ENCODE measurements at regions of chr17 and their contacts with region 1.

Region 1: DNA sequence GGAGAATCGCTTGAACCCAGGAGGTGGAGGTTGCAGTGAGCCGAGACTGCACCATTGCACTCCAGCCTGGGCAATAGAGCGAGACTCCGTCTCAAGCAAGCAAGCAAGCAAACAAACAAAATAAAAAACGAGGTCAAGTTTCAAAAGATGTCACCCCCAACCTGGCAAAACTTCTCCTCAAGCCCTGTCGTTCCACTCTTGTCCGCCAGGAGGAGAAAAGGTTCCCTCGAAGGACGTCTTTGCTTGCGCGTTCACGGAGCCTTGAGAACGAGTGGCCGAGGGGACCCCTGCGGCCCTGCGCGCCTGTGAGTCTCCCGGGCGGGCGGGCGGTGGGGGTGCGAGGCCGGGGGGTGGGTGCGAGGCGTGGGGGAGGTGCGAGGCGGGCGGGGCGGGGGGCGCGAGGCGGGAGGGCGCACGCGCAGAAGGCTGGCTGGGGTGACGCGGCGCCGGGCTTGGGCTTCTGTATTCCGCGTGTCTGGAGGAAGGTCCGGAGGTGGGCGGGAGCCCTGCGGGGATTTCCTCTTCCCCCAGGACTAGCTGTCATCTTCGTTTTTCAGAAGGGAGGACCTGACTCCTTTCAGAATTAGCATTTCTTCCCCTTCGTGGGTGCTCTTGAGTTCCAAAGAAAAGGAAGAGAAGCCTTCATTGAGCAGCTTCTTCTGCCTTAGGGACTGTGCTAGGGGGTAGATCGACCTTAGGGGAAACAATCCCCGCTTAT is 3.7 kb downstream of the SLC52A1 start:
- DNase-seq: peak; percentile 61 to 85 (median 78)
- ATAC-seq: peak; percentile 90
- H3K4me3 ChIP-seq: peak overlapping the region; percentile 56
- H3K4me3 Mint-ChIP-seq: peak overlapping the region; percentile 79 to 89 (median 86)
- H3K27ac ChIP-seq: peak overlapping the region; percentile 79
- H3K27ac Mint-ChIP-seq: peak overlapping the region; percentile 89 to 95 (median 92)
- H3K4me1 ChIP-seq: peaks cover 10 to 17% of the 10 kb centered on the region in 2 donors
- H3K4me1 Mint-ChIP-seq: peaks cover 5 to 29% (median 23%) of the 10 kb centered on the region in 7 donors
- H3K27me3 ChIP-seq: no peaks in the 10 kb centered on the region
- H3K27me3 Mint-ChIP-seq: peaks cover 0 to 4% (median 0%) of the 10 kb centered on the region in 5 donors

Region 2: GRCh38 chr17:4394208-4395110 is 637.1 kb before region 1 on chr17:
- CTCF ChIA-PET with region 1: no interaction called
- POLR2A ChIA-PET with region 1: no interaction called
- intact Hi-C with region 1: no loop called
- DNase-seq: no peak
- ATAC-seq: no peak
- H3K4me3 ChIP-seq: no peak overlapping the region
- H3K4me3 Mint-ChIP-seq: no peak overlapping the region
- H3K27ac ChIP-seq: no peak overlapping the region
- H3K27ac Mint-ChIP-seq: peak overlapping the region in 2 of 9 donors; percentile 13 to 30
- H3K4me1 ChIP-seq: no peaks in the 10 kb centered on the region
- H3K4me1 Mint-ChIP-seq: peaks cover 0 to 26% (median 5%) of the 10 kb centered on the region in 7 donors
- H3K27me3 ChIP-seq: no peaks in the 10 kb centered on the region
- H3K27me3 Mint-ChIP-seq: no peaks in the 10 kb centered on the region

Region 3: GRCh38 chr17:4747847-4748246 is 283.7 kb before region 1 on chr17:
- CTCF ChIA-PET with region 1: no interaction called
- POLR2A ChIA-PET with region 1: no interaction called
- intact Hi-C with region 1: no loop called
- DNase-seq: peak in 7 of 9 donors; percentile 28 to 67 (median 58)
- ATAC-seq: peak; percentile 95
- H3K4me3 ChIP-seq: no peak overlapping the region
- H3K4me3 Mint-ChIP-seq: peak overlapping the region; percentile 66 to 77 (median 72)
- H3K27ac ChIP-seq: no peak overlapping the region
- H3K27ac Mint-ChIP-seq: peak overlapping the region; percentile 61 to 90 (median 77)
- H3K4me1 ChIP-seq: peaks cover 5 to 7% of the 10 kb centered on the region in 2 donors
- H3K4me1 Mint-ChIP-seq: peaks cover 13 to 26% (median 21%) of the 10 kb centered on the region in 7 donors
- H3K27me3 ChIP-seq: no peaks in the 10 kb centered on the region
- H3K27me3 Mint-ChIP-seq: peaks cover 0 to 40% (median 0%) of the 10 kb centered on the region in 5 donors

Region 4: DNA sequence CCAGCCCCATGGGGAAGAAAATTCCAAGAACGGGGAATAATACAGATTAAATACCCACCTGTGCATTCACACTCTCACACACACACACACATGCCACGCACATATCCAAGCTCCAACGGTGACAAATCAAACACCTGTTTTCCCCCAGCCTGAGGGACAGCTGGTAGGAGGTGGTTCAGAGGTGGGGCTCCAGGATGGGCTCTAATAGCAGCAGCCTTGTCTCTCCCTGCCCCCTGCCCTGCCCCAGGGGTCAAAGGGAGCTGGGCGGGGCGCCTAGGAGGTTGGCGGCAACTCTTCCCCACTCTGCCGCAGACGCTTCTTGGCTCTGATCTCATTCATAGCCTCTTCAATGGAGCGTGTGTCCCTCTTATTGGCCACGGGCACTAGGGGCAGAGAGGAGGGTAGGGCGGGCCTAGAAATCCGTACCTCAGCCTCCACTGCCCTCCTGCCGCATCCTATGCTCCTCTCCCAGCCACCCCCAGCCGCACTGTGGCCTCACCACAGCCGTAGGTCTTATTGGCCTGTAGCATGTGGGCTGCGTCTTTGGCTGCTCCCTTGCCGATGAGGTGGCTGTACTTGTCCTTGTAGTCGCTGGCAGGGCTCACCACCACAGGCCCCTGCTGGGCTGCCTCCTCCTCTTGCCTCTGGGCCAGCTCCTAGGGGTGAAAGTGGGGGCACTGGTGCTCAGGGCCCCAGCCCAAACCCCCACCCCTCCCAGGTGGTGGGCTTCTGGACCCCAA is 72.1 kb before region 1 on chr17:
- CTCF ChIA-PET with region 1: no interaction called
- POLR2A ChIA-PET with region 1: no interaction called
- intact Hi-C with region 1: no loop called
- DNase-seq: no peak
- ATAC-seq: no peak
- H3K4me3 ChIP-seq: no peak overlapping the region
- H3K4me3 Mint-ChIP-seq: no peak overlapping the region
- H3K27ac ChIP-seq: no peak overlapping the region
- H3K27ac Mint-ChIP-seq: peak overlapping the region in 1 of 9 donors; percentile 54
- H3K4me1 ChIP-seq: peaks cover 0 to 7% of the 10 kb centered on the region in 2 donors
- H3K4me1 Mint-ChIP-seq: peaks cover 0 to 17% (median 11%) of the 10 kb centered on the region in 7 donors
- H3K27me3 ChIP-seq: no peaks in the 10 kb centered on the region
- H3K27me3 Mint-ChIP-seq: no peaks in the 10 kb centered on the region

Region 5: GRCh38 chr17:4980644-4981216 is 50.8 kb before region 1 on chr17:
- CTCF ChIA-PET with region 1: interaction called, 9 read pairs
- POLR2A ChIA-PET with region 1: no interaction called
- intact Hi-C with region 1: loop called (anchors 1 to 5 kb)
- DNase-seq: peak in 7 of 9 donors; percentile 58 to 77 (median 74)
- ATAC-seq: peak; percentile 92
- H3K4me3 ChIP-seq: no peak overlapping the region
- H3K4me3 Mint-ChIP-seq: peak overlapping the region in 8 of 10 donors; percentile 2 to 83 (median 41)
- H3K27ac ChIP-seq: no peak overlapping the region
- H3K27ac Mint-ChIP-seq: peak overlapping the region; percentile 31 to 78 (median 67)
- H3K4me1 ChIP-seq: peaks cover 3 to 14% of the 10 kb centered on the region in 2 donors
- H3K4me1 Mint-ChIP-seq: peaks cover 13 to 34% (median 26%) of the 10 kb centered on the region in 7 donors
- H3K27me3 ChIP-seq: no peaks in the 10 kb centered on the region
- H3K27me3 Mint-ChIP-seq: no peaks in the 10 kb centered on the region

Region 6: DNA sequence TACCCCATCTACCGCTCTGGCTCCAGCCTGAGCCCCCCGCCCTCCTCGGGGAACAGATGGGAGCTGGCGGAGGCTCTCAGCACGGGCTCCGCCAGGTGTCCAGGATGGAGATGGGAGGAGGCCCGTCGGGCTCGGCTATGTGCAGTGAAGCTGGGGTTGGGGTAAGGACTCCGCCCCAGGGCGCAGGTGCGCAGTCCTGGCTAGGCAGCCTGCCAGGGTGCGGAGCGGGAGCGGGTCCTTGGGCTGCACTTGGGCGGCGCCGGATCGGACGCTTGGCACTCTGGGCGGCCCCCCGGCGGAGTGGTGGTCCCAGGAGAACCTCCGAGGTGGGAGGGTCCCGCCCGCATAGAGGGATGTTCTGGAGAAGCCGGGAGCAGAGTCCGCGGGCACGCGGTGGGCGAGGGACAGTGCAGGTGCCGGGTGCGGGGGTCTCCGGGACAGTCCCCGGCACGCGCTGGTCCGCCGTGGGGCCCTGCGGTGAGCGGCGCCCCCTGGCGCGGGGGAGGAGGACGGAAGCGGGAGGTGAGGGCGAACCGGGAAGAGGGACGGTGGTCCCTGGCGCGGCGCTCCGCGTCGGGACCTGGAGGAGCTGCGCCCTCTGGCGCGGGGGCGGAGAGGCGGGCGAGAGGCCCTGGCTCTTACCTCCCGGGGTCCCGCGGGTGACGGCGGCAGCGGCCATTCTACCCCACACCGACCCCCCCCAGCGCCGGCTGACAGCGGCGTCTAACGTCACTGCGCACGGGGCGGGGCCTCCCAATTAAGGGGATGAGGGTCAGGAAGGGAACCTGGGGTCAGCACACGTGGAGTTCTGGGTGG is 44.4 kb before region 1 on chr17 and contains the start of gene CAMTA2:
- CTCF ChIA-PET with region 1: no interaction called
- POLR2A ChIA-PET with region 1: interaction called, 3 read pairs
- intact Hi-C with region 1: loop called in 1 of 2 experiments (anchors 5 kb)
- DNase-seq: peak; percentile 70 to 87 (median 80)
- ATAC-seq: peak; percentile 93
- H3K4me3 ChIP-seq: peak within 1 kb of the TSS; percentile 91
- H3K4me3 Mint-ChIP-seq: peak within 1 kb of the TSS; percentile 86 to 94 (median 91)
- H3K27ac ChIP-seq: peak within 1 kb of the TSS; percentile 99
- H3K27ac Mint-ChIP-seq: peak within 1 kb of the TSS; percentile 87 to 95 (median 93)
- H3K4me1 ChIP-seq: peaks cover 10 to 23% of the 10 kb centered on the region in 2 donors
- H3K4me1 Mint-ChIP-seq: peaks cover 29 to 51% (median 46%) of the 10 kb centered on the region in 7 donors
- H3K27me3 ChIP-seq: no peaks in the 10 kb centered on the region
- H3K27me3 Mint-ChIP-seq: no peaks in the 10 kb centered on the region
- total RNA-seq, gene CAMTA2: 55.2 to 90.0 (median 64.1) TPM

Region 7: DNA sequence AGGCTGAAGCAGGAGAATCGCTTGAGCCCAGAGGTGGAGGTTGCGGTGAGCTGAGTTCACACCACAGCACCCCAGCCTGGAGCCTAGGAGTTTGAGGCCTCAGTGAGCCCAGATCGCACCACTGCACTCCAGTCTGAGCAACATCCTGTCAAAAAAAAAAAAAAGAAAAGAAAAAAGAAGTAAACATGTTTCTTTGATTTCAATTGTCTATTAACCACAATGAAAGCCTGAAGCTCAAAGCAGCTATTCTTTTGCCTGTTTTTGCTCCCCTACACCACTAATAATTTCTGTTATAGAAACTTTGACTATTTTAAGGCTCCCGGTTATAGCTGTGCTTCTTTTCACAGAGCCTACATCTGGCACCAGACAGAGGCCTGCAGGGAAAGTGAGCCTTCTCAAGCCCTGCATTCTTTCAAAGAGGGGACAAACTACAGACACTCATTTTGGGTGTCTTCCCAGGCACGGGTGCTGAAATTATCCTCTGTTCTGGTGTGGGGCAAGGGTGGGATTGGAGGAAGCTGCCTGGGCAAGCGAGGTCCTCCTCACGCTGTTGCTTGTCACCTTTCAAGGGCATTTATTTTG is 17.9 kb after region 1 on chr17:
- CTCF ChIA-PET with region 1: interaction called, 21 read pairs
- POLR2A ChIA-PET with region 1: interaction called, 18 read pairs
- intact Hi-C with region 1: loop called (anchors 1 to 2 kb)
- DNase-seq: peak in 7 of 9 donors; percentile 67 to 84 (median 83)
- ATAC-seq: peak; percentile 99
- H3K4me3 ChIP-seq: no peak overlapping the region
- H3K4me3 Mint-ChIP-seq: peak overlapping the region; percentile 36 to 72 (median 54)
- H3K27ac ChIP-seq: peak overlapping the region; percentile 58
- H3K27ac Mint-ChIP-seq: peak overlapping the region; percentile 71 to 99 (median 95)
- H3K4me1 ChIP-seq: peaks cover 38 to 55% of the 10 kb centered on the region in 2 donors
- H3K4me1 Mint-ChIP-seq: peaks cover 10 to 58% (median 46%) of the 10 kb centered on the region in 7 donors
- H3K27me3 ChIP-seq: no peaks in the 10 kb centered on the region
- H3K27me3 Mint-ChIP-seq: no peaks in the 10 kb centered on the region

Region 8: GRCh38 chr17:5055543-5055942 is 24.0 kb after region 1 on chr17:
- CTCF ChIA-PET with region 1: interaction called, 118 read pairs
- POLR2A ChIA-PET with region 1: interaction called, 18 read pairs
- intact Hi-C with region 1: no loop called
- DNase-seq: no peak
- ATAC-seq: no peak
- H3K4me3 ChIP-seq: no peak overlapping the region
- H3K4me3 Mint-ChIP-seq: no peak overlapping the region
- H3K27ac ChIP-seq: no peak overlapping the region
- H3K27ac Mint-ChIP-seq: peak overlapping the region in 1 of 9 donors; percentile 20
- H3K4me1 ChIP-seq: peaks cover 0 to 4% of the 10 kb centered on the region in 2 donors
- H3K4me1 Mint-ChIP-seq: peaks cover 0 to 1% (median 0%) of the 10 kb centered on the region in 7 donors
- H3K27me3 ChIP-seq: no peaks in the 10 kb centered on the region
- H3K27me3 Mint-ChIP-seq: no peaks in the 10 kb centered on the region

Region 9: DNA sequence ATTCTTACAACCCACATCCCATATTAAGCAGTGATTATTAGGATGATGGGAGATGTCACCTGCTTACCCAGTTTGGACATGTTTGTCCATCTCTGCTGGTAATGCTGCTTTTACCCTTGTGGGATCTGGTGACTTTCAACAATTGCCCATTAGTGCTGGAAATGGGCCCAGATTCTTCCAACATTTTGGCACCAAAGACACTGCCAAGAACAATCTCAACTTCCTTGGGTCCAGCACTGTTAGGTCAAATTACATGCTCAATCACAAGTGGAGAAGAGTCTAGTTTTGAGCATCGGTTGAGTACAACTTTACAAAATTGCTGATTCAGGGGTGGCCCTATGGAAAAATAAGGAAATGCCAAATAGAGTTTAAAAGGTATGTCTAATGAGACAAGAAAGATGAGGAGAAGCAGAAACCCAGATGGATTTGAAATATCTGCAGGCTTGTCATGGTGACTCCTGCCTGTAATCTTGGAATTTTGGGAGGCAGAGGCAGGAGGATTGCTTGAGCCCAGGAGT is 33.8 kb after region 1 on chr17:
- CTCF ChIA-PET with region 1: interaction called, 118 read pairs
- POLR2A ChIA-PET with region 1: interaction called, 22 read pairs
- intact Hi-C with region 1: loop called (anchors 1 kb)
- DNase-seq: no peak
- ATAC-seq: no peak
- H3K4me3 ChIP-seq: no peak overlapping the region
- H3K4me3 Mint-ChIP-seq: no peak overlapping the region
- H3K27ac ChIP-seq: no peak overlapping the region
- H3K27ac Mint-ChIP-seq: no peak overlapping the region
- H3K4me1 ChIP-seq: peaks cover 0 to 2% of the 10 kb centered on the region in 2 donors
- H3K4me1 Mint-ChIP-seq: peaks cover 0 to 10% (median 7%) of the 10 kb centered on the region in 7 donors
- H3K27me3 ChIP-seq: no peaks in the 10 kb centered on the region
- H3K27me3 Mint-ChIP-seq: no peaks in the 10 kb centered on the region